Posterior cingulate gyrus (tissue), 11 donors: ENCODE measurements at regions of chr7 and their contacts with region 1.

Region 1: GRCh38 chr7:94289071-94289470 is 105.6 kb upstream of the COL1A2 start:
- DNase-seq: peak in 6 of 10 donors; percentile 12 to 81 (median 40)

Region 2: GRCh38 chr7:94395141-94396036 is 106.3 kb after region 1 on chr7:
- intact Hi-C with region 1: loop called (anchors 2 kb)
- DNase-seq: peak in 1 of 10 donors; percentile 18

Region 3: DNA sequence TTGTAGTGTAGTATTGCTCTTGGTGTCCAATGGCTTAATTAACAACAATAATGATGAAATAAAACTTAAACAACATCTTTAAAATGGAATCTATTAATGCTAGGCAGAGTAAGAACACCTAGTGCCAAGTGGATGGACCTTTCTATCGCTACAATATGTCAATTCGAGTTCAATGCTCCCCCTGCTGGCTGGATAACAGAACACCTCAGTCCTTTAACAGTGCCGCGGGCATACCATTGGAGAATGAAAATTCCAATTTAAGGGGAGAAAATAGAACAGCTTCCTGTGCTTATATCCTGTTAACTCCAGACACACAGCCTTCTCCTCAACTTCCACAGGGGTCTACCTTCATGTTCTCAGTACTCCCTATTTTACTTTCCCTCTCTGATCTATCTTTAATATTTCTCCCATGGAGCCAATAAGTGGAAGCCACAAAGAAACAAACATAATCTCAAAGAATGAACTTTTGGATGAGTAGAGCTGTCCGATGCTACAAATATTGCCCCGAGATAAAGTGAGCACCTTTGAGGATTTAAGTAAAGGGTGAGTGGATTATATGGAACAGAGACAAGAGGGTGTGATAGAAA is 147.0 kb after region 1 on chr7:
- intact Hi-C with region 1: loop called (anchors 5 kb)
- DNase-seq: peak in 7 of 10 donors; percentile 14 to 86 (median 57)